GM10248 (cell line): ENCODE measurements at regions of chr3 and their contacts with region 1.

Region 1: GRCh38 chr3:14203521-14204079 is 25.0 kb downstream of the LSM3 start:
- DNase-seq: peak; percentile 76
- CTCF ChIP-seq: peak; percentile 82

Region 2: GRCh38 chr3:13895155-13896105 is 308.2 kb before region 1 on chr3:
- CTCF ChIA-PET with region 1: interaction called, 11 read pairs
- POLR2A ChIA-PET with region 1: no interaction called
- DNase-seq: peak; percentile 92
- CTCF ChIP-seq: no peak

Region 3: DNA sequence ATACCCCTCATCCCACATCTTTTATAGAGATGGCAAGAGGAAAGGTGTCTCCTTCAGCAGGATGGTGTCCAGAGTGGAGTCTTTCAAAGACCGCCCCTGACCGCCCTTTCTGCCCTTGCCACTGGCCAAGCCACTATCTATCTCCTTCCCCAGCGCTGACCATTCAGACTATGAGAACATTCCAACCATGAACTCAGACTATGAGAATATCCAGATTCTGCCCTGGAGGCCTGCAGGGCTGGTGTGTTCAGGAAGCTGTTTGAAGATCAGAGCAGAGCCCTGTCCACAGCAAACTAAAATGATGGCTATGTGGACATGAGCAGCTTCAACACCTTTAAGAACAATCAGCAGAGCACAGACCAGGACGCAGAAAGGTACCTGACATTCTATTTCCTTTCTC is 266.5 kb before region 1 on chr3:
- CTCF ChIA-PET with region 1: no interaction called
- POLR2A ChIA-PET with region 1: no interaction called
- DNase-seq: no peak
- CTCF ChIP-seq: no peak

Region 4: DNA sequence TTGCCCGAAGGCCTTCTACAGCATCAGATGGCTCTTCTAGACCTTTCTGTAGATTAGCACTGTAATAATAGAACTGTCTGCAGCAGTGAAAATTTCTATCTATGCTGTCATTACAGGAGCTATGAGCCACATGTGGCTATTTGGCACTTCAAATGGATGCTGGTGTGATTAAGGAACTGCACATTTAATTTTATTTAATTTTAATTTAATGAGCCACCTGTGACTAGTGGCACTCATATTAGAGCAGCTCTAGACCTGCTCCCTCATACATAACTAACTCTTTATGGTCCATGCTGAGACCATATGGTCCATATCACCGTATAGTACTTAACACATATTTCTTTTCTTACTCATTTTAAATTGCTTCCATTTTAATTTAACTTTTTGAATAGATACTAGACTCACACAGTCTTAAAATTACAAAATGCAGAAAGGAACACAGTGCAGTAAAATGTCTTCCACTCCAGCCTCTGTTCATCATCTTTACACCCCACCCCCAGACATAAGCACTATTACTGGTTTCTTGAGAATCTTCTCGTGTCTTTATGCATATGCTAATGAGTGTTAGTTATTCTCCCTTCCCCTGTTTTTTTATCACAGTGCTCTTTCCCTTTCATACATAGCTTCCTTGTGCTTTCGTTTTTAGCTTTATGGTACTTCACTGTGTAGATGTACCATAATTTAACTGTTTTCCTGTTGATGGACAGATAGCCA is 15.4 kb before region 1 on chr3:
- CTCF ChIA-PET with region 1: interaction called, 19 read pairs
- POLR2A ChIA-PET with region 1: no interaction called
- DNase-seq: no peak
- CTCF ChIP-seq: no peak

Region 5: GRCh38 chr3:14222900-14223594 is 19.4 kb after region 1 on chr3:
- CTCF ChIA-PET with region 1: interaction called, 18 read pairs
- POLR2A ChIA-PET with region 1: no interaction called
- DNase-seq: no peak
- CTCF ChIP-seq: no peak

Region 6: GRCh38 chr3:14234251-14235002 is 30.8 kb after region 1 on chr3:
- CTCF ChIA-PET with region 1: interaction called, 19 read pairs
- POLR2A ChIA-PET with region 1: no interaction called
- DNase-seq: no peak
- CTCF ChIP-seq: no peak

Region 7: DNA sequence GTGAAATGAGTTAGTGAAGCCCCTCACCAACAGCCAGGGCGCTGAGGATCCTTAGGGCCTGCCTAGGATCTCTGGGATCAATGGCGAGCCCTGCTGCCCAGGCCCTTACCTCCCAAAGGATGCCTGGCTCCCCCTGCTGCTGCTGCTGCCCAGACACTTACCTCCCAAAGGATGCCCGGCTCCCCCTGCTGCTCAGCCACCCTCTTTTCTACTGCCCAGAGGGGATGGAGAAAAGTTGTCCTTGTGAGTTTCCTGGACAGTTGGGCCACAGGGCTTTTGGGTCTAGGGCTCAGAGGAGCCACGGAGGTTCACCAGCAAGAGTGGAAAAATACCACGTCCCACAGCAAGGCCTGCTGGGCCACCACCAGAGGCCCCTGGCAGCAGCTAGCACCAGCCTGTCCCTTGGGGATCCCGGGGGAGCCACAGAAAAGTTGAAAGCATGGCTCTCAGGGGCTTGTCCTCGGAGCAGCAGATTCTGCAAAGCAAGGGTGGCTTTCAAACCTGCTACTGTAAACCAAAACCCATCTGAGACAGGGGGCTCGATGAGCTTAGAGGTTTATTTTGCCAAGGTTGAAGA is 258.2 kb after region 1 on chr3:
- CTCF ChIA-PET with region 1: interaction called, 51 read pairs
- POLR2A ChIA-PET with region 1: no interaction called
- DNase-seq: peak; percentile 74
- CTCF ChIP-seq: peak; percentile 74

Region 8: DNA sequence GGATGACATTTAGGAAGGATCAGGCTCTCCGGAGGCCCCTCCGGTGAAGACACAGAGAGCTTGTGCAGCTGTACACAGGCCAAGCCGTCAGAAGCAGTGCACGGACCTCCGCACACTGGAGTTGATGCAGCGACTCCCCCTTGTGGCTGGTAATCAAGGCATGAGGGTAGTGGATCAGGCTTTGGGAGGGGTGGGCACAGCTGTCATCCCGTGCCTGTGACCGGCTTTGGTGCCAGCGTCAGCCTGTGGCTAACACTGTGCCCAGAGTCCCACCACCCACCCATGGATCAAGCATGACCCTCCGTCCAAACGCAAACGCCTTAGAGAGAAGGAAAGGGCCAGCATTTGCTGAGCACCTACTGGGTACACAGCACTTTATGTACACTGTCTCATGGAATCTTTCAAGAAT is 344.7 kb after region 1 on chr3:
- CTCF ChIA-PET with region 1: interaction called, 13 read pairs
- POLR2A ChIA-PET with region 1: no interaction called
- DNase-seq: peak; percentile 65
- CTCF ChIP-seq: peak; percentile 57